ENCODE measurements at regions of chr7 and their contacts with region 1.

Region 1: DNA sequence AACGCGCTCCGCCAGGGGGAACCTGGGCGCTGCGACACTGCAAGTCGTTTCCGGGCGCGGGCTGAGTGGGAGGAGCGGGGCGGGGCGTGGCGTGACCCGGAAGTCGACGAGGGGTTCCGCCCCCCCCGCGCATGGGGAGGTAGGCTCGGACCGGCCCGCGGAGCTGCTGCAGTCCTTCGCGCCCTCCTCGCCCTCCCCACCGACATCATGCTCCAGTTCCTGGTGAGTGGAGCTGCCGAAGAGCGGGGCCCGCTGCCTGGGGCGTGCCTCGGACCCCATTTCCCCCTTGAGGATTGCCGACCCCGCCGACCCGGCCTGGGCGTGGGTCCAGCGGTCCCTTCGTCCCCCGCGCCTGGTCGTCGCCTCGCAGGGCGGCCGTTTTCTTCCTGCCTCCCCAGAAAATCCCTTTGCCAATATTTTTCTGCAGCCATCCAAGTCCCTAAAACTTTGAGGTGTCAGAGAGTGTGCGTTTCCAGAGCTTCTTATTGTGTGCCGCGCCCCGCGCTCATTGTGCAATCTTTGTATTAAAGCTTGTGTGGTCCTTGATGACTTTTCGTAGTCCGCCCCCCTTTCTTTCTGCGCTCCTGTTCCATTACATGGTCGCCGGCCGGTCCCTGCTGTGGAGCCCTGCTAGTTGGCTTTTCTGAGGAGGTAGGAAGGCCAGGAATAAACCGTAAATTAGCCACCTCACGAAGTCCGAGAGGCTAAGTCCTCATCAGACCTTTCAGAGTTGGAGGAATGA is at the start of gene STMP1:
- DNase-seq: peak; percentile 98
- H3K4me3 ChIP-seq: peak within 1 kb of the TSS; percentile 71 to 99 (median 98)
- H3K27ac ChIP-seq: peak within 1 kb of the TSS; percentile 91 to 96 (median 95)
- H3K4me1 ChIP-seq: peaks cover 7 to 31% (median 15%) of the 10 kb centered on the region in 4 donors
- H3K27me3 ChIP-seq: no peaks in the 10 kb centered on the region
- CTCF ChIP-seq: peak in 2 of 5 experiments; percentile 5 to 86
- EP300 ChIP-seq: no peak
- POLR2A ChIP-seq: peak; percentile 91
- total RNA-seq, gene STMP1: 3.0 to 21.6 (median 12.0) TPM

Region 2: DNA sequence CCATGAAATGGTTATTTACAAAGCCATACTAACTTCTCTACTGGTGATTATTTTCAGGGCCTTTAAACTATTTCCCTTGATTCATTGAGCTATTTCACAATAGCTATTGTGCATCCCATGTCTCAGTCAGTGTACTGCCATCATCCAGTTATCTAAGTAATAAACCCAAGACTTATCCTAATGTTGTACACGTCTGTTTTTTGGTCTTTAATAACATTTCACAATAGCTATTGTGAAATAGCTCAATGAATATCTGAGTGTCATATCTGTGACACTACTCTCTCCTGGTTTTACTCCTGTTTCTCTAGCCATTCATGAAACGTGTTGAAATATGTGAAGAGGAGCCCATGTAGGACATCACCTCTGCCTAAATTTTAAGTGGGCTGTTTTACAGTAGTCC is 551.2 kb before region 1 on chr7:
- in situ Hi-C with region 1: no loop called
- intact Hi-C with region 1: no loop called
- DNase-seq: no peak
- H3K4me3 ChIP-seq: no peak overlapping the region
- H3K27ac ChIP-seq: no peak overlapping the region
- H3K4me1 ChIP-seq: no peaks in the 10 kb centered on the region
- H3K27me3 ChIP-seq: no peaks in the 10 kb centered on the region
- CTCF ChIP-seq: no peak
- EP300 ChIP-seq: no peak
- POLR2A ChIP-seq: no peak

Region 3: DNA sequence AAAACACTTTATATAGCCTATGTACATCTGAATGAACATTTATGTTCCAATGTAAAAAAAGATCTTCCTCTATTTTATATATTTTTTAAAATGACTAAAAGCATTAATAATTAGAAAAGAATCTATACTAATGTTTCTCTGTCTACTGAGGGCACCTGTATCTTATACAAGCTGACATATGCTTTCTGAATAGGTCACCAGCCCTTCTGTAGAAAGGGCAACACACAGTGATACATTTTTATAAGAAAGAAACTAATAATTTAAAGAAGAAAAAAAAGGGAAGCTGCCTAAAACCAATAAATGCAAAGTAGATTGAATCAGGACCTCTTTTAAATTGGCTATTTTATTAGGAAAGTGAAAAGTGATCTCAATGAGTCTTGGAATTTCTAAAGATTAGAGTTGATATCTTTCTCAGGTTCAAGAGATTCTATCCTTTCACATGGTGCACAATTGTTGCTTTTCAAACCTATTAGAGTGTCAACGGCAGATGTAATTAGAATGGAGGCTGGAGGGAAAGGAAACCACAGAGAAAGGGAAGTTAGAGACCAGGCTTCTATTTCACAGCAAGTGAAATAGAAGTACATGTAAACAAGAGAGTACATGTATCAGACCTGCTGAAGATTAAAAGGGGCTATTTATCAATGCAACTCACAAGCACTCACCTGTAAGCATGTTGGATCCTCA is 308.3 kb after region 1 on chr7:
- in situ Hi-C with region 1: loop called in 1 of 4 experiments (anchors 25 kb)
- intact Hi-C with region 1: loop called (anchors 5 kb)
- DNase-seq: no peak
- H3K4me3 ChIP-seq: no peak overlapping the region
- H3K27ac ChIP-seq: peak overlapping the region in 1 of 4 donors; percentile 2
- H3K4me1 ChIP-seq: peaks cover 5 to 43% (median 10%) of the 10 kb centered on the region in 4 donors
- H3K27me3 ChIP-seq: no peaks in the 10 kb centered on the region
- CTCF ChIP-seq: no peak
- EP300 ChIP-seq: no peak
- POLR2A ChIP-seq: no peak

Region 4: DNA sequence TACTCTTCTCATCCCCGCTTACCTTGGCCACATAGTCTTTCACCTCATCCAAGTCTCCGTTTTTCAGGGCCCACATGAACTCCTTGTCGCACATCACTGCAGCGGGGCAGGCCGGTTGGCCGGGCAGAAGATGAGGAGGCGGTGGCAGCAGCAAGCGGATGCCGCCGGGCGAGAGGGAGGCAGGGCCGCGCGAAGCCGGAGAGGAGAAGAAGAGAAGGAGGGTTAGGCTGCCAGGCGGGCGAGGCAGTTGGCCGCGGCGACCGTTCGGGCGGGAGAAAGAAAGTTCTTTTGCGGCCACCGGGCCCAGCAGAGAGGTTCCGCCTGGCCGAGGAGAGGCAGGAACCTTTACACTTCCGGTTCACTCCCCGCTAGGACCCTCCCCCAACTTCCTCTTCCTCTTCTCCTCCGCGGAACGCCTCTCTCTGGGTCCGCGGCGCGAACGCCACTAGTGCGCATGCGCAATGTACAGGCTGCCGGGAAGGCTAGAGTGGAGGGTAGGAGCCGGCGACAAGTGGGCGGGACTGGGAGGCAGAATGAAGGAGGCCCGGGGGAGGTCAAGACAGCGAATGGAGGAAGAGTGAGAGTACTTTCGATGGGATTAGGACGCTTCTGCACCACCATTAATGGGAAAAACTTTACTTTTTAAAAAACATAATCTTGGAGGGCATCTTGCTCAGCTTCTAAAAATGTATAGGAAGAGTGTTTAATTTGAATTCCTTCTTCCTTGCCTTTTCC is 314.6 kb after region 1 on chr7 and contains the start of gene MTPN:
- in situ Hi-C with region 1: loop called in 1 of 4 experiments (anchors 25 kb)
- intact Hi-C with region 1: loop called (anchors 5 kb)
- DNase-seq: peak; percentile 99
- H3K4me3 ChIP-seq: peak within 1 kb of the TSS; percentile 77 to 99 (median 82)
- H3K27ac ChIP-seq: peak within 1 kb of the TSS; percentile 87 to 95 (median 92)
- H3K4me1 ChIP-seq: peaks cover 11 to 52% (median 17%) of the 10 kb centered on the region in 4 donors
- H3K27me3 ChIP-seq: no peaks in the 10 kb centered on the region
- CTCF ChIP-seq: no peak
- EP300 ChIP-seq: no peak
- POLR2A ChIP-seq: peak; percentile 78
- total RNA-seq, gene MTPN: 44.9 to 71.7 (median 65.5) TPM

Region 5: GRCh38 chr7:136086712-136087111 is 424.2 kb after region 1 on chr7:
- in situ Hi-C with region 1: no loop called
- intact Hi-C with region 1: no loop called
- DNase-seq: peak; percentile 12
- H3K4me3 ChIP-seq: peak overlapping the region in 2 of 4 donors; percentile 20 to 36
- H3K27ac ChIP-seq: peak overlapping the region in 2 of 4 donors; percentile 9 to 21
- H3K4me1 ChIP-seq: peaks cover 0 to 10% (median 0%) of the 10 kb centered on the region in 4 donors
- H3K27me3 ChIP-seq: no peaks in the 10 kb centered on the region
- CTCF ChIP-seq: no peak
- EP300 ChIP-seq: no peak
- POLR2A ChIP-seq: no peak